PC-3 (cell line): ENCODE measurements at regions of chr6 and their contacts with region 1.

Region 1: GRCh38 chr6:26568601-26569432 is 27.9 kb upstream of the ABT1 start:
- DNase-seq: peak; percentile 98
- ATAC-seq: peak; percentile 56
- H3K4me3 ChIP-seq: peak overlapping the region; percentile 84
- H3K27ac ChIP-seq: 0 out of 2 replicates have a peak overlapping the region, but pooled peaks have one; percentile 5
- H3K4me1 ChIP-seq: peaks cover 5% of the 10 kb centered on the region; the same call in 1 of the 2 replicates
- H3K27me3 ChIP-seq: no peaks in the 10 kb centered on the region
- CTCF ChIP-seq: peak; percentile 54

Region 2: GRCh38 chr6:26312501-26313390 is 256.1 kb before region 1 on chr6:
- CTCF ChIA-PET with region 1: no interaction called
- POLR2A ChIA-PET with region 1: no interaction called
- intact Hi-C with region 1: loop called (anchors 1 kb)
- DNase-seq: peak; percentile 91
- ATAC-seq: peak; percentile 70
- H3K4me3 ChIP-seq: peak overlapping the region; percentile 73
- H3K27ac ChIP-seq: peak overlapping the region; percentile 49
- H3K4me1 ChIP-seq: peaks cover 24% of the 10 kb centered on the region
- H3K27me3 ChIP-seq: no peaks in the 10 kb centered on the region
- CTCF ChIP-seq: no peak

Region 3: GRCh38 chr6:26383624-26384417 is 185.0 kb before region 1 on chr6:
- CTCF ChIA-PET with region 1: no interaction called
- POLR2A ChIA-PET with region 1: no interaction called
- intact Hi-C with region 1: no loop called
- DNase-seq: peak; percentile 59
- ATAC-seq: peak; percentile 51
- H3K4me3 ChIP-seq: peak overlapping the region; percentile 70
- H3K27ac ChIP-seq: peak overlapping the region; percentile 37
- H3K4me1 ChIP-seq: peaks cover 15% of the 10 kb centered on the region
- H3K27me3 ChIP-seq: no peaks in the 10 kb centered on the region
- CTCF ChIP-seq: no peak

Region 4: GRCh38 chr6:26520853-26521599 is 47.8 kb before region 1 on chr6:
- CTCF ChIA-PET with region 1: no interaction called
- POLR2A ChIA-PET with region 1: interaction called, 4 read pairs
- intact Hi-C with region 1: loop called (anchors 2 kb)
- DNase-seq: peak; percentile 81
- ATAC-seq: peak; percentile 92
- H3K4me3 ChIP-seq: peak overlapping the region; percentile 75
- H3K27ac ChIP-seq: no peak overlapping the region
- H3K4me1 ChIP-seq: peaks cover 15% of the 10 kb centered on the region
- H3K27me3 ChIP-seq: no peaks in the 10 kb centered on the region
- CTCF ChIP-seq: no peak

Region 5: GRCh38 chr6:26553635-26554446 is 15.0 kb before region 1 on chr6:
- CTCF ChIA-PET with region 1: interaction called, 6 read pairs
- POLR2A ChIA-PET with region 1: no interaction called
- intact Hi-C with region 1: loop called (anchors 1 kb)
- DNase-seq: peak; percentile 95
- ATAC-seq: peak; percentile 63
- H3K4me3 ChIP-seq: peak overlapping the region; percentile 93
- H3K27ac ChIP-seq: peak overlapping the region; percentile 62
- H3K4me1 ChIP-seq: peaks cover 15% of the 10 kb centered on the region
- H3K27me3 ChIP-seq: no peaks in the 10 kb centered on the region
- CTCF ChIP-seq: no peak

Region 6: DNA sequence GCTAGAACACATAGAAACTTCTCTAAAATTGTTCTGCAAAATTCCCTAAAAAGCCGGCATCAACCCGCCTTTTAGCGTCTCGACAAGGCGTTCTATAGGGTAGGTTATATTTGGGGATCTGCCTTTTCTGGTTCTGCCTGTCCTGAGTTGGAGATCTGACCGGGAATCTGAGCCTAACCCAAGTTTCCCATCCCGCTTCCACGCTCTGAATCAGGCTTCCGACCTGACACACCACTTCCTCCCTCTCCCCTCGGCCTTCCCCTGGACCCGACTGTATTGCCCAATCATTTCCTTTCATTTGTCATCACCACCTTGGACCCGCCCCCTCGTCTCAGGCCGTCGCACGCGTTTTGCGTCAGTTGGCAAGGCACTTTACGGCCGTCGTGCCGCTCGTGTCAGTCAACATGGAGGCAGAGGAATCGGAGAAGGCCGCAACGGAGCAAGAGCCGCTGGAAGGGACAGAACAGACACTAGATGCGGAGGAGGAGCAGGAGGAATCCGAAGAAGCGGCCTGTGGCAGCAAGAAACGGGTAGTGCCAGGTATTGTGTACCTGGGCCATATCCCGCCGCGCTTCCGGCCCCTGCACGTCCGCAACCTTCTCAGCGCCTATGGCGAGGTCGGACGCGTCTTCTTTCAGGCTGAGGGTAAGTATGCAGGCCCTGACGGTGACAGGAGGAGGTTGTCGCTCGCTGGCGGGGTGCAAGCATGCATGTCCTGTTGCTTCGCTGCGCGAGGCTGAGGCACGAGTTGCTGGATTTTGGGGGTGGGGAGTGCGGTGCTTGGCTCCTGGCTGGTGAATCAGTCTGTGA is 28.0 kb after region 1 on chr6 and contains the start of gene ABT1:
- CTCF ChIA-PET with region 1: interaction called, 8 read pairs
- POLR2A ChIA-PET with region 1: interaction called, 3 read pairs
- intact Hi-C with region 1: loop called (anchors 1 kb)
- DNase-seq: peak; percentile 98
- ATAC-seq: peak; percentile 91
- H3K4me3 ChIP-seq: peak within 1 kb of the TSS; percentile 99
- H3K27ac ChIP-seq: peak within 1 kb of the TSS; percentile 69
- H3K4me1 ChIP-seq: peaks cover 10% of the 10 kb centered on the region; the same call in 1 of the 2 replicates
- H3K27me3 ChIP-seq: no peaks in the 10 kb centered on the region
- CTCF ChIP-seq: no peak
- total RNA-seq, gene ABT1: 26.9 and 33.7 TPM in 2 replicates

Region 7: DNA sequence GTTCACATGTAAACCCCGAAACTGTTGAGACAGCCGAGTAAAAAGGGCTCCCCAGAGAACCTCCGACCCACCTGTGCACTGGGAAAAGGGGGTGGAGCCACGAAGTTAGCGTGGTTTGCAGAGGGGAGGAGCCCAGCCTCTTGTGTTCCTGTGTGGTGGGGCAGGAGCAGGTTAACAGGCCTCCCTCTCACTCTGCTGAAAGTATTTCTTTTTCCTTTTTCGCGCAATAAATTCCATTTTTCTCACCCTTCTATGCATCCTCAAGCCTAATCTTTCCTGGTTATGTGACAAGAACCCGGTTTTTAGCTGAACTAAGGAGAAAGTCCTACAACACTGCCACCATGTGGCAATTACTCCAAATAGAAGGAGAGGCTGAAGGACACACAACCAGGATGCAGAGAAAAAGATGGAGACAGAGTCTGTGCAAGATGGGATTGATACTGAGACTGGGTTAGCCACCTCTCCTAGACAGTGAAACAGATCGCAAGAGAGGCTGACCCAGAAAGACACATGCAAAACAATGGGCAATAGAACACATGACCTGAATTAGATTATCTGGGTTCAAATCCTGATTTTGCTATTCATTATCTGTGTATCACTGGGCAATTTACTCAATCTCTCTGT is 510.0 kb after region 1 on chr6:
- CTCF ChIA-PET with region 1: no interaction called
- POLR2A ChIA-PET with region 1: no interaction called
- intact Hi-C with region 1: no loop called
- DNase-seq: peak; percentile 73
- ATAC-seq: peak; percentile 95
- H3K4me3 ChIP-seq: peak overlapping the region; percentile 68
- H3K27ac ChIP-seq: no peak overlapping the region
- H3K4me1 ChIP-seq: peaks cover 9% of the 10 kb centered on the region; the same call in 1 of the 2 replicates
- H3K27me3 ChIP-seq: no peaks in the 10 kb centered on the region
- CTCF ChIP-seq: peak; percentile 95